ENCODE measurements at regions of chr6 and their contacts with region 1.

Region 1: DNA sequence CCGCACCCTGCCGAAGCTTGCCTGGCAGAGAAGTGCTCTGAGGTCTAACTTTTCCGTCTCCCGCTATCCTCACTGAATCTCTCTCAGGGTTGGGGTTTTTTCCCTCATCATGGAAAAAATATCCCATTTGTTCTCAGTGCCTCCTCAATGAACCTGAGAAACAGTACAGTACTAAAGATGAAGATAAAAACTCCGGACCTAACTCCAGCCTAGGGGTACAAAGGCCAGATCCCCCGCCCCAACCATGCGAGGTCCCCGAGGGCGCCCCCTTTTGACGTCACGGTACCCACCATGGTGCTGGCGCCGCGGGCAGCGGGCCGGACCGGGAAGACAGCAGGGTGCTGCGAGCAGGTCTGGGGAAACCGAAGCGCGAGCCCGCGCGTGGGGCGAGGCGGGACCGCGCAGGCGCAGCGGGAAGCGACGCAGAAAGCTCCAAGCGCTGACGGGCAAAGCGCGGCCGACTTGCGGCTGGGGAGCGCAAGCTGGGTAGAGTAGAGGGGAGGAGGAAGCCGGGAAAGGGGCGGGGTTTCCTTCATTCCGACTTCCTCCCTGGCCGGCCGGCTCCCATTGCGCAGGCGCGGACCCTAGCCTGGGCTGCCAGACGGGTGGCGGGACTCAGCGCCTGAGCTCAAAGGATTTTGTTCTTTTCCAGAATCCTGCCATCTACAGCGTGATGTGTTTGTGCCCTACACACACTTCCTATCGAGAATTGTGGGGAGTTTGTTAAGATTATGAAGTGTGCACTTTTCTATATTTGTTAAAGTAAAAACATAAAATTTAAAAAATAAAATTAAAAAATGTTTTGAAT is at the start of gene LSM2:
- DNase-seq: peak; percentile 97 to 98 (median 97)
- H3K4me3 ChIP-seq: peak within 1 kb of the TSS; percentile 84 to 89
- H3K4me3 Mint-ChIP-seq: peak within 1 kb of the TSS; percentile 86 to 97 (median 90)
- H3K27ac ChIP-seq: peak within 1 kb of the TSS; percentile 80
- H3K27ac Mint-ChIP-seq: peak within 1 kb of the TSS; percentile 89 to 97 (median 93)
- H3K4me1 ChIP-seq: peaks cover 23% of the 10 kb centered on the region
- H3K4me1 Mint-ChIP-seq: peaks cover 11 to 37% (median 27%) of the 10 kb centered on the region in 4 donors
- H3K27me3 ChIP-seq: no peaks in the 10 kb centered on the region
- H3K27me3 Mint-ChIP-seq: no peaks in the 10 kb centered on the region
- total RNA-seq, gene LSM2: 30.0 to 34.6 TPM

Region 2: DNA sequence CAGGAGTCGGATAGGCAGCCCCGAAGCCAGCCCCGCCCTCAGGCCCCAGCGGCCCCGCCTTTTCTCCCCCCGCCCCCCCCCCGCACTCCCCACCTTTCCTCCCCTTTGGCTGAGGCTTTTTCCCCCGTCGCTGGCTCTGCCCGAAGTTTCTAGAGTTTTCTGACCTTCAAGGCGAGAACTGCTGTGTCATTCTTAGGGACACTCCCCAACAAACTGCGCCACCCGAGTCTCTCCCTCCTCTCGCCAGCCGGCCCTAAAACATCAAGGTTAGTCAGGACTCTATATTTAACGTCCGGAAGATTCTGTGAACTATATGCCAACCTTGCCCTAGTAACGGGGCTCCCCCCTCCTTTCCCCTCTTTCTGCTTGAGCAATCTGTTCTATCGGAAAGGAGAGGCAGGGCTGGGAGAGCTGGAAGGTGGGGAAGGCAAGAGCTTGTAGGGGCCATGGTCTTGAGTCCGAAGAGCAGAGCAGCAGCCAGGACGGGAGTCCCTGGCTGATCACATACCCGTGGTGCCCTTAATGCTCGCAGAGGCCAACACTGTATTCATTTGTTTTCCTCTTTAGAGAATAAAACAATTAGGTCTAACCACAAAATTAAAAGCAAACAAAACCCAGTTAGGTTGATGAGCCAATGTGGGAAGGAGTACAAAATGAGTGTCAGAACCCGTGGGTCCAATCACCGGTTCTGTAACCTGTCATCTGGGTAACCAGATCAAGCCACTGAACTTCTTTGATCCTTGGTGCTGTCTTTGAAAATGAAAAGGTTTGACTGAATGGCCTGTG is 15.6 kb after region 1 on chr6:
- CTCF ChIA-PET with region 1: interaction called, 12 read pairs
- POLR2A ChIA-PET with region 1: interaction called, 37 read pairs
- intact Hi-C with region 1: no loop called
- DNase-seq: peak; percentile 71 to 83 (median 73)
- H3K4me3 ChIP-seq: peak overlapping the region; percentile 84 to 96
- H3K4me3 Mint-ChIP-seq: peak overlapping the region; percentile 94 to 98 (median 97)
- H3K27ac ChIP-seq: peak overlapping the region; percentile 74
- H3K27ac Mint-ChIP-seq: peak overlapping the region; percentile 98 to 99 (median 98)
- H3K4me1 ChIP-seq: peaks cover 72% of the 10 kb centered on the region
- H3K4me1 Mint-ChIP-seq: peaks cover 31 to 81% (median 54%) of the 10 kb centered on the region in 4 donors
- H3K27me3 ChIP-seq: no peaks in the 10 kb centered on the region
- H3K27me3 Mint-ChIP-seq: no peaks in the 10 kb centered on the region

Measured in CD4-positive, alpha-beta memory T cell (primary cell).